ENCODE measurements at regions of chr9 and their contacts with region 1.

Region 1: DNA sequence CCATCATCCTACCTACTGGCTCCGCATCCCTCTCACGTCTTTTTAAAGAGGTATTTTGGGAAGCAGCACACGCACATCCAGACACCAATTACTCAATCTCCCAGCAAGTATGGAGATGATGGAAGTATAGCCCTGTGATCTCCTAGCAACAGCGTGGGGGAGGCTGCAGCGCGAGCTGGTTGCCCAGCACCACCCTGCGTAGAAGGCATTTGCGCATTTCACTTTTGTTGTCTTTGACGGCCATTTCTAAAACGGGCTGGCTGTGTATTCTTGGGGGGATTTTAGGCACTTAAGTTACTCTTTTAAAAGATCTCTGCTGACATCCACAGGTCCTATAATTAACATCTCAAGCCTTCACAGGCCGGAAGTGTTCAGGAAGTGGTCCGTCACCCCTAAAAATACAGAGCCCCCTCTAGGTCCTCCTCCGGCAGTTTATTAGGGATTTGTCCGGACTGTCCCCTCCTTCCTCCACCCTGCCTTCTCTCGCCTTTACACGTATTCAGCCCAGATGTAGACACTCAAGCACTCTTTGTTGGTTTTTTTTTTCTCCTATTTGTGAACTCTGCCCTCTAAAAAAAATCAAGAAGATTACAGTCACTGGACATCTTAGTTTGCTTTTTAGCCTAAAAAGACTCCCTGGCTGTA is 371.4 kb downstream of the NTRK2 start:
- DNase-seq: no peak
- ATAC-seq: no peak
- H3K4me3 ChIP-seq: no peak overlapping the region
- H3K27ac ChIP-seq: no peak overlapping the region
- H3K4me1 ChIP-seq: no peaks in the 10 kb centered on the region
- H3K27me3 ChIP-seq: no peaks in the 10 kb centered on the region
- CTCF ChIP-seq: no peak
- POLR2A ChIP-seq: no peak
- RAD21 ChIP-seq: no peak

Region 2: GRCh38 chr9:84773022-84773421 is 267.9 kb before region 1 on chr9:
- CTCF ChIA-PET with region 1: no interaction called
- POLR2A ChIA-PET with region 1: no interaction called
- dilution Hi-C with region 1: no loop called
- in situ Hi-C with region 1: no loop called
- intact Hi-C with region 1: no loop called
- DNase-seq: peak; percentile 41
- ATAC-seq: no peak
- H3K4me3 ChIP-seq: no peak overlapping the region
- H3K27ac ChIP-seq: no peak overlapping the region
- H3K4me1 ChIP-seq: peaks cover 7% of the 10 kb centered on the region; the same call in 1 of the 2 replicates
- H3K27me3 ChIP-seq: no peaks in the 10 kb centered on the region
- CTCF ChIP-seq: no peak
- POLR2A ChIP-seq: no peak
- RAD21 ChIP-seq: no peak

Region 3: GRCh38 chr9:85237478-85237877 is 196.5 kb after region 1 on chr9:
- CTCF ChIA-PET with region 1: no interaction called
- POLR2A ChIA-PET with region 1: no interaction called
- dilution Hi-C with region 1: no loop called
- in situ Hi-C with region 1: no loop called
- intact Hi-C with region 1: loop called (anchors 5 kb)
- DNase-seq: no peak
- ATAC-seq: no peak
- H3K4me3 ChIP-seq: no peak overlapping the region
- H3K27ac ChIP-seq: no peak overlapping the region
- H3K4me1 ChIP-seq: no peaks in the 10 kb centered on the region
- H3K27me3 ChIP-seq: no peaks in the 10 kb centered on the region
- CTCF ChIP-seq: no peak
- POLR2A ChIP-seq: no peak
- RAD21 ChIP-seq: no peak